CD8-positive, alpha-beta T cell (primary cell): ENCODE measurements at regions of chr12 and their contacts with region 1.

Region 1: GRCh38 chr12:8544295-8544694 is 3.6 kb upstream of the CLEC4E start:
- DNase-seq: peak; percentile 46 to 84 (median 75)
- ATAC-seq: peak; percentile 81
- H3K4me3 ChIP-seq: no peak overlapping the region
- H3K4me3 Mint-ChIP-seq: peak overlapping the region; percentile 13
- H3K27ac ChIP-seq: no peak overlapping the region
- H3K27ac Mint-ChIP-seq: no peak overlapping the region
- H3K4me1 ChIP-seq: no peaks in the 10 kb centered on the region
- H3K4me1 Mint-ChIP-seq: peaks cover 9% of the 10 kb centered on the region
- H3K27me3 ChIP-seq: no peaks in the 10 kb centered on the region
- H3K27me3 Mint-ChIP-seq: peaks cover 14% of the 10 kb centered on the region
- CTCF ChIP-seq: peak; percentile 95

Region 2: GRCh38 chr12:8572507-8572906 is 28.2 kb after region 1 on chr12:
- CTCF ChIA-PET with region 1: interaction called, 36 read pairs
- POLR2A ChIA-PET with region 1: interaction called, 4 read pairs
- intact Hi-C with region 1: no loop called
- DNase-seq: peak in 1 of 9 experiments; percentile 40
- ATAC-seq: no peak
- H3K4me3 ChIP-seq: no peak overlapping the region
- H3K4me3 Mint-ChIP-seq: no peak overlapping the region
- H3K27ac ChIP-seq: no peak overlapping the region
- H3K27ac Mint-ChIP-seq: peak overlapping the region; percentile 19
- H3K4me1 ChIP-seq: no peaks in the 10 kb centered on the region
- H3K4me1 Mint-ChIP-seq: peaks cover 15% of the 10 kb centered on the region
- H3K27me3 ChIP-seq: no peaks in the 10 kb centered on the region
- H3K27me3 Mint-ChIP-seq: no peaks in the 10 kb centered on the region
- CTCF ChIP-seq: no peak

Region 3: GRCh38 chr12:8609061-8609570 is 64.8 kb after region 1 on chr12:
- CTCF ChIA-PET with region 1: interaction called, 21 read pairs
- POLR2A ChIA-PET with region 1: interaction called, 3 read pairs
- intact Hi-C with region 1: loop called (anchors 1 kb)
- DNase-seq: peak in 2 of 9 experiments; percentile 20 to 28
- ATAC-seq: no peak
- H3K4me3 ChIP-seq: no peak overlapping the region
- H3K4me3 Mint-ChIP-seq: peak overlapping the region; percentile 59
- H3K27ac ChIP-seq: no peak overlapping the region
- H3K27ac Mint-ChIP-seq: no peak overlapping the region
- H3K4me1 ChIP-seq: no peaks in the 10 kb centered on the region
- H3K4me1 Mint-ChIP-seq: peaks cover 11% of the 10 kb centered on the region
- H3K27me3 ChIP-seq: no peaks in the 10 kb centered on the region
- H3K27me3 Mint-ChIP-seq: peaks cover 6% of the 10 kb centered on the region
- CTCF ChIP-seq: peak; percentile 53

Region 4: GRCh38 chr12:8681041-8681902 is 137.0 kb after region 1 on chr12:
- CTCF ChIA-PET with region 1: interaction called, 25 read pairs
- POLR2A ChIA-PET with region 1: no interaction called
- intact Hi-C with region 1: loop called (anchors 1 to 10 kb)
- DNase-seq: no peak
- ATAC-seq: no peak
- H3K4me3 ChIP-seq: no peak overlapping the region
- H3K4me3 Mint-ChIP-seq: no peak overlapping the region
- H3K27ac ChIP-seq: no peak overlapping the region
- H3K27ac Mint-ChIP-seq: no peak overlapping the region
- H3K4me1 ChIP-seq: no peaks in the 10 kb centered on the region
- H3K4me1 Mint-ChIP-seq: peaks cover 10% of the 10 kb centered on the region
- H3K27me3 ChIP-seq: no peaks in the 10 kb centered on the region
- H3K27me3 Mint-ChIP-seq: peaks cover 2% of the 10 kb centered on the region
- CTCF ChIP-seq: no peak

Region 5: DNA sequence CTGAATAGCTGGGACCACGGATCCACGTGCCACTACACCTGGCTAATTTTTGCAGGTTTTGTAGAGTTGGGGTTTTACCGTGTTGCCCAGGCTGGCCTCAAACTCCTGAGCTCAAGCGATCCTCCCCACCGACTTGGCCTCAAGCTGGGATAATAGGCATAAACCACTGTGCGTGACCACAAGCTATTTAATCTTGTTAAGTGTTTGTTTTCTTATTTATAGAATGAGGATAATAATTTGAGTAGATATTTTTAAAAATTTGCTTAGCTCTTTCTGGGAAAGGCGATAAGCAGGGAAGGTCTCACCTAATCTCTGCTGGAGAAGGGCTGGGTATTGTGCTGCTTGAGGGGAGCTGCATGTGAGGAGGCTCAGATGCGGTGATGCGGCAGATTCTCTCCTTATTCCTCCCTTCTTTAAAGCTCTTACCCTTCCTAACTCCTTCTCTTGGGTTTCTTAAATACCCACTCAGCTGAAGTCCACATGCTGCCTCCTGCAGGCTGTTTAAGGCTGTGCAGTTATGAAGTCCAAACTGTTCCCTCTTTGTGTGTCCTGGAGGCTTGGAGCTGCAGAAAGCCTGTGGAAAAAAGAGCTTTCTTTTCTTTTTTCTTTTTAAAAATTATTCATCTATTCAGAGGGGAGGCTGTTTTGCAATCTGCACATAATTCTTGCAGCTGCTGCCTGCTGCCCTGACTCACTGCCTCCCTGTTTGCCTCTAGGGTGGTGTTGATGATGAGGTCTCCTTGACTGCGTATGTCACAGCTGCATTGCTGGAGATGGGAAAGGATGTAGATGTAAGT is 316.1 kb after region 1 on chr12:
- CTCF ChIA-PET with region 1: interaction called, 31 read pairs
- POLR2A ChIA-PET with region 1: no interaction called
- intact Hi-C with region 1: loop called in 1 of 2 experiments (anchors 1 kb)
- DNase-seq: peak in 8 of 9 experiments; percentile 10 to 64 (median 29)
- ATAC-seq: peak; percentile 51
- H3K4me3 ChIP-seq: no peak overlapping the region
- H3K4me3 Mint-ChIP-seq: no peak overlapping the region
- H3K27ac ChIP-seq: no peak overlapping the region
- H3K27ac Mint-ChIP-seq: no peak overlapping the region
- H3K4me1 ChIP-seq: no peaks in the 10 kb centered on the region
- H3K4me1 Mint-ChIP-seq: no peaks in the 10 kb centered on the region
- H3K27me3 ChIP-seq: no peaks in the 10 kb centered on the region
- H3K27me3 Mint-ChIP-seq: no peaks in the 10 kb centered on the region
- CTCF ChIP-seq: peak; percentile 53